ENCODE measurements at regions of chr18 and their contacts with region 1.

Region 1: DNA sequence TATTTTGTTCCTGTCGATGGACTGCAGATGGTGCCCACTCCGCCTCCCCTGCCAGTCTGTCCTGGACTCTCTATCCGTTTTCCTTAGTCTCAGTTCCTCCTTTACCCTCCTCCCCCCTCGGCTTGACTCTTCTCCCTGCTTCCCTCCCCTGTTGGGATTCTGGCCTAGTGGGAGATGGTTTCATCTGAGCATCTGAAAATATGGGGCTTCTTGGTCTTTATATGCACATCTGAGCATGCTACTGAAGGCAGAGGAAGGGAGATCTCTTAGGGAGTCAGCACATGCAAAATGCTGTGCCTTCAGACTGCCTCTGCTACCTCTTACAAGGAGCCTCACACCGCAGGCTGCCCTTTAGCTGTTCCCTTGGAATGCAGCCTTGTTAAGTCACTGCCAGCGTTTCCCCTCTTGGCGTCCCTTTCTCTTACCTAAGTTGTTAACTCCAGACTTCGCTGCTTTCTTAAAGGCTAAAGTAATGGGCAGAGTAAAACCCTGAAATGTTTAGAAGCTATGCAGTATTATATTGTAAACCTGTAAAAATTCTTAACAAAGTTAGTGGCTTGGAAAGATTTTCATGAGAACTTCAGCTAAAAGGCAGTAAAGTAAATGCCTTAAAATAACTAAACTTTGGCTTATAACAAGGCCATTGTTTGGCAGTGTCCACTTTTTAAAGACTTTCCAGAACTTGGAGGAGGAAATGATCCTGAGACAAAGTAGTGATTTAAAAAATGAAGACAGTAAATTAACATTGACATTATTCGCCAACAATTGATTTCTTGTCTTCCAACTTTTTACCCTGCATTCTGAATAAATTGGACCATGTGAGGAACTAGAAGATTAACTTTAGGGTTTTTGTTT is 49.8 kb downstream of the LDLRAD4 start:
- DNase-seq: no peak
- H3K4me3 Mint-ChIP-seq: peak overlapping the region; percentile 19
- H3K27ac Mint-ChIP-seq: peak overlapping the region; percentile 74
- H3K4me1 Mint-ChIP-seq: peaks cover 62% of the 10 kb centered on the region
- H3K27me3 Mint-ChIP-seq: peaks cover 7% of the 10 kb centered on the region

Region 2: DNA sequence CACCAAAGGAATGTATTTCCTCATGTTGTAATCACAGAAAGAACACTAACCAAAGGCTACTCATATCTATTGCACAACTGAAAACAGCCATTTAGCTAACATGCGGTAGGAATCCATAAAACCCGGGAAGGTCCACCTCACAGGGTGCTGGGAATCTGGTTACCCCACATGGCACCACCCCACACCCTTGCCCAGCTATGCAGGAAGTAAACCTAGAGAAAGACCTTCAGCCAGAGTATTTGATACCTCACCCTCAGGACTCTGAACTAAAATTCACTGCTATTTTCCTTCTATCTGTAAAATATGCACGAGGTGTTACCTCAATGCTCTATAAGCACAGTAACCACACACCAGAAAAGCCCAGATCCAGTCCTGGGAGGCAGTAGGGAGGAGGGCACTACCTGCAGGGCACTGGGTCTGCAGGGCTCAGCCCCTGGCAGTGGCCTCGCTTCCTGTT is 430.2 kb before region 1 on chr18:
- intact Hi-C with region 1: loop called (anchors 5 kb)
- DNase-seq: peak; percentile 16
- H3K4me3 Mint-ChIP-seq: peak overlapping the region; percentile 78
- H3K27ac Mint-ChIP-seq: peak overlapping the region; percentile 92
- H3K4me1 Mint-ChIP-seq: peaks cover 78% of the 10 kb centered on the region
- H3K27me3 Mint-ChIP-seq: no peaks in the 10 kb centered on the region

Region 3: GRCh38 chr18:13289481-13290205 is 21.3 kb after region 1 on chr18:
- intact Hi-C with region 1: loop called (anchors 1 kb)
- DNase-seq: no peak
- H3K4me3 Mint-ChIP-seq: no peak overlapping the region
- H3K27ac Mint-ChIP-seq: peak overlapping the region; percentile 67
- H3K4me1 Mint-ChIP-seq: peaks cover 66% of the 10 kb centered on the region
- H3K27me3 Mint-ChIP-seq: peaks cover 3% of the 10 kb centered on the region

Region 4: DNA sequence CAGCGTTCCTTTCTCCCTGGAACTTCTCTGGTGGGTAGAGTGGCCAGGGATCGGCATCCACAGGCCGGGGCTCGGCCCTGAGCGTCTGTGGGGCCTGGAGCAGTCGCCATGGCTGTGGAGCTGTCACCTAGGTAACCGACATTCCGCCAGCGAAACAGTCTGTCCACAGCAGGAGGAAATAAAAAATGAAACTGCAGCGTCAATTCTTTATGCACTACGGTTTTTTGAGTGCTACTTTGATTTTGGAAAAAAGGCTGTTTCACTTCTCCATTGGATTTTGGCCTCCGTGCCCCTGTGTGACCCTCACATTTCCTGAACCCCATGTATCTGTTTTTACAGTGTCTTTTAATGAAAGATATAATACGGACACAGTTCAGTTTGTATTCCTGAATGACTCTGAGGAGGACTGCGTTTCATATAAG is 113.6 kb after region 1 on chr18:
- intact Hi-C with region 1: loop called (anchors 1 kb)
- DNase-seq: peak; percentile 35
- H3K4me3 Mint-ChIP-seq: peak overlapping the region; percentile 79
- H3K27ac Mint-ChIP-seq: peak overlapping the region; percentile 98
- H3K4me1 Mint-ChIP-seq: peaks cover 53% of the 10 kb centered on the region
- H3K27me3 Mint-ChIP-seq: peaks cover 4% of the 10 kb centered on the region

Region 5: GRCh38 chr18:13471971-13472628 is 203.7 kb after region 1 on chr18:
- intact Hi-C with region 1: no loop called
- DNase-seq: no peak
- H3K4me3 Mint-ChIP-seq: no peak overlapping the region
- H3K27ac Mint-ChIP-seq: no peak overlapping the region
- H3K4me1 Mint-ChIP-seq: peaks cover 19% of the 10 kb centered on the region
- H3K27me3 Mint-ChIP-seq: no peaks in the 10 kb centered on the region

Region 6: DNA sequence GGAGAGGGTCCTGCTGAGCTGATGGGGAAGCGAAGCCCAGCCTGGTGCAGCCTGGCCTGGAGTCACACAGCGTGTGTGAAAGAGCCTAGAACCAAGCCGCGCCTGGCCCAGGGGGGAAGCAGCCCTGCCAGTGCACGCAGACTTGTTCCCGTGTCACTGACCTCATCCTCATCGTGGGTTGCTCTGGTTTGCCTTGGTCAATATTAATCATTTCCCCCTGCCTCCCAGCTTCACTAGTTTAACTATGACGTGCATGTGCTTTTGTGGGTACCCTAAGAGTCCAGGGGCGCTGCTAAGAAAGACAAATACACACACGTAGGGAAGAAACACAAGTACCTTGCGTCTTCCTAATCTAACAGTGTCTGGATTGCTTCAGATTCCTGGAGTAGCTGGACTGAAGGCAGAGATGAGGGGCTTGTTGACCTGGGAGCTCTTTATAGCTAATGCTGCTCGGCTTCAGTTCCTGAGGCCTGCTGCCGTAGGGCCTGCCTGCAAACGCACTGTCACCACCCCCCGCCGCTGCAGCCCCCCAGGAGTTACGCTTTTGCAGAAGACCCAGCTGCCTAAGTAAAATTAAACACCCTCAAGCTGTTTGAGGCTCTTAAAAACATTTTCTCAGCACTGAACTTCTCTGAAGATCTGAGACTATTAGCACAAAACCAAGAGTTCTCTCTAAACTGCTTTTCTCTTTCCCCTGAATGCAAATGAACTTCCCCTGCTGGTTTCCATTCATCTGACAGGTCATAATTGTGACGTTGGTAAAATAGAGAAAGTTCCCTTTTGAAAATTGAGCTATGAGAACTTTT is 298.8 kb after region 1 on chr18:
- intact Hi-C with region 1: loop called (anchors 1 kb)
- DNase-seq: no peak
- H3K4me3 Mint-ChIP-seq: peak overlapping the region; percentile 61
- H3K27ac Mint-ChIP-seq: peak overlapping the region; percentile 87
- H3K4me1 Mint-ChIP-seq: peaks cover 72% of the 10 kb centered on the region
- H3K27me3 Mint-ChIP-seq: no peaks in the 10 kb centered on the region

Region 7: DNA sequence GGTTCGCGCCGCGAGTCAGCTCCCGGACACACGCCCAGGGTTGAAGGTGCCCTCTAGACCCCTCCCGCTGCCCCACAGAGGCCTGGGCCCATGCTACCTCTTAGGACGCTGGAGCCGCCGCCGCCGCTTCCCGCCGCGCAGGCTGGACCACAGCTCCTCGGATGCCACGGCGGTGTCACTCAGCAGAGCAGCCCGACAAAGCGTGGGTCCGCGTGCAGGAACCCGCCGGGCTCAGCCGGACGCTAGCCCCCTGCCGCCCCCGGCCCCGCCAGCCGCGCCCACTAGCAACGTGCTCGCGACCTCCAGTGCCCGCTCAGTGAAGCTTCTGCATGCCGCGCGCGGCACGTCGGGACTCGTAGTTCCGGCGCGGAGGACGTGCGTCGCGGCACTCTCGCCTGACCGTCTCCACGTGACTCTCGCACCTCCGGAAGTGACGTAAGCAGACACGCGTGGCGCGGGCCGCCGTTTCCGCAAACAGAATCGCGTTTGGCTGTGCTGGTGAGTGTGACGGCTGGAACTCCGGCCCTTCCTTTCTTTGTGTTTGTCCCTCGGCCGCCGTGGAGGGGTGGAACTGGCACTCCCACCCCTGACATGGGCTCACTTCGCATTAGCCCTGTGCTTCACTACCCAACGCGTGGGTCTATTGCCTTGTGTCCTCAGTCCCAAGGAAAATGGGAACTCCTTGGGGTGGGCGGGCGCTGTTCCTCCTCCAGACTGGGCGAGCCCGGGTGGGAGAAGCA is 458.0 kb after region 1 on chr18 and contains the starts of genes FAM210A and RNMT:
- intact Hi-C with region 1: loop called (anchors 2 kb)
- DNase-seq: peak; percentile 94
- H3K4me3 Mint-ChIP-seq: peak within 1 kb of the TSS; percentile 93
- H3K27ac Mint-ChIP-seq: peak within 1 kb of the TSS; percentile 86
- H3K4me1 Mint-ChIP-seq: peaks cover 72% of the 10 kb centered on the region
- H3K27me3 Mint-ChIP-seq: no peaks in the 10 kb centered on the region
- total RNA-seq, gene FAM210A: 27.7 and 29.5 TPM in 2 replicates
- total RNA-seq, gene RNMT: 55.8 and 60.6 TPM in 2 replicates